Heart right ventricle (tissue), 16 donors: ENCODE measurements at regions of chr4 and their contacts with region 1.

Region 1: DNA sequence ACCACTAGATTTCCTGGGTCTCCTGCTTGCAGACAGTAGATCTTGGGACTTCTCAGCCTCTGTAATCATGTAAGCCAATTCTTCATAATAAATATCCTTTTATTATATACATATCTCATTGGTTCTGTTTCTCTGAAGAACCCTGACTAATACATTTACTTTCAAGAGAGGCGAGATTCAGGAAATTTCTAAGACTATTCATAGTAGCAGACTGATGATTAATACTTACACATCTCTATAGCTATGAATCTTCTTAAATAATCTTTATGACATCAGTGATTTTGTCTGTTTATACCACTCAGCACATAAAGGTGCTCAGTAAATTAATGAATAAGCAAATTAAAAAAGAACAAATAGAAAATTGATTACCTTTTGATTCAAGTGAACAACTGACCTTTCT is 682.3 kb upstream of the GRID2 start:
- DNase-seq: no peak
- ATAC-seq: no peak
- H3K4me3 ChIP-seq: no peak overlapping the region
- H3K27ac ChIP-seq: no peak overlapping the region
- H3K4me1 ChIP-seq: no peaks in the 10 kb centered on the region
- H3K27me3 ChIP-seq: no peaks in the 10 kb centered on the region
- CTCF ChIP-seq: no peak

Region 2: GRCh38 chr4:89657931-89658700 is 1963.3 kb before region 1 on chr4:
- intact Hi-C with region 1: no loop called
- DNase-seq: no peak
- ATAC-seq: no peak
- H3K4me3 ChIP-seq: no peak overlapping the region
- H3K27ac ChIP-seq: no peak overlapping the region
- H3K4me1 ChIP-seq: peaks cover 0 to 5% (median 0%) of the 10 kb centered on the region in 9 donors
- H3K27me3 ChIP-seq: no peaks in the 10 kb centered on the region
- CTCF ChIP-seq: peak in 7 of 9 donors; percentile 15 to 61 (median 50)

Region 3: GRCh38 chr4:91471280-91471679 is 150.2 kb before region 1 on chr4:
- intact Hi-C with region 1: no loop called
- DNase-seq: no peak
- ATAC-seq: no peak
- H3K4me3 ChIP-seq: no peak overlapping the region
- H3K27ac ChIP-seq: no peak overlapping the region
- H3K4me1 ChIP-seq: no peaks in the 10 kb centered on the region
- H3K27me3 ChIP-seq: no peaks in the 10 kb centered on the region
- CTCF ChIP-seq: no peak

Region 4: GRCh38 chr4:91840359-91840758 is 218.9 kb after region 1 on chr4:
- intact Hi-C with region 1: loop called in 1 of 10 experiments (anchors 5 kb)
- DNase-seq: no peak
- ATAC-seq: no peak
- H3K4me3 ChIP-seq: no peak overlapping the region
- H3K27ac ChIP-seq: no peak overlapping the region
- H3K4me1 ChIP-seq: no peaks in the 10 kb centered on the region
- H3K27me3 ChIP-seq: no peaks in the 10 kb centered on the region
- CTCF ChIP-seq: no peak

Region 5: GRCh38 chr4:91851456-91851855 is 230.0 kb after region 1 on chr4:
- intact Hi-C with region 1: no loop called
- DNase-seq: no peak
- ATAC-seq: no peak
- H3K4me3 ChIP-seq: no peak overlapping the region
- H3K27ac ChIP-seq: no peak overlapping the region
- H3K4me1 ChIP-seq: no peaks in the 10 kb centered on the region
- H3K27me3 ChIP-seq: no peaks in the 10 kb centered on the region
- CTCF ChIP-seq: no peak

Region 6: DNA sequence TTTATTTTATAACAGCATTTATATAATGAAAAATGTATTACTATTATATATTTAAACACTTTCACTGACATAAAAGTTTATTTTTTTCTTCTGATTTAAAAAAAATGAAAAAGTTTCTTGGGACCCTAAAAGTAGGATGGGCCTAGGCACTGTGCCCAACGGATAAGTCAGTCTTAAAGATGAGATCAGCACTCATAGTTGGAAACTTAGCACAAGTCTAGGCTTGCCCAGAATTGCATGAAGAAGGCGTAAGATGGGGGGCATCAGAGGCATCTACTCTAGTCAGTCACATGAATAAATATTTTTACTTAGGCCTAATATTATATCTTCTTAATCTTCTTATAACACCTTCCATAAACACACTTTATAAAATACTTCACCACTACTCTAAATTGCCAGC is 375.6 kb after region 1 on chr4:
- intact Hi-C with region 1: no loop called
- DNase-seq: no peak
- ATAC-seq: no peak
- H3K4me3 ChIP-seq: no peak overlapping the region
- H3K27ac ChIP-seq: no peak overlapping the region
- H3K4me1 ChIP-seq: no peaks in the 10 kb centered on the region
- H3K27me3 ChIP-seq: no peaks in the 10 kb centered on the region
- CTCF ChIP-seq: no peak